Dorsolateral prefrontal cortex (tissue), 120 donors: ENCODE measurements at regions of chr4 and their contacts with region 1.

Region 1: DNA sequence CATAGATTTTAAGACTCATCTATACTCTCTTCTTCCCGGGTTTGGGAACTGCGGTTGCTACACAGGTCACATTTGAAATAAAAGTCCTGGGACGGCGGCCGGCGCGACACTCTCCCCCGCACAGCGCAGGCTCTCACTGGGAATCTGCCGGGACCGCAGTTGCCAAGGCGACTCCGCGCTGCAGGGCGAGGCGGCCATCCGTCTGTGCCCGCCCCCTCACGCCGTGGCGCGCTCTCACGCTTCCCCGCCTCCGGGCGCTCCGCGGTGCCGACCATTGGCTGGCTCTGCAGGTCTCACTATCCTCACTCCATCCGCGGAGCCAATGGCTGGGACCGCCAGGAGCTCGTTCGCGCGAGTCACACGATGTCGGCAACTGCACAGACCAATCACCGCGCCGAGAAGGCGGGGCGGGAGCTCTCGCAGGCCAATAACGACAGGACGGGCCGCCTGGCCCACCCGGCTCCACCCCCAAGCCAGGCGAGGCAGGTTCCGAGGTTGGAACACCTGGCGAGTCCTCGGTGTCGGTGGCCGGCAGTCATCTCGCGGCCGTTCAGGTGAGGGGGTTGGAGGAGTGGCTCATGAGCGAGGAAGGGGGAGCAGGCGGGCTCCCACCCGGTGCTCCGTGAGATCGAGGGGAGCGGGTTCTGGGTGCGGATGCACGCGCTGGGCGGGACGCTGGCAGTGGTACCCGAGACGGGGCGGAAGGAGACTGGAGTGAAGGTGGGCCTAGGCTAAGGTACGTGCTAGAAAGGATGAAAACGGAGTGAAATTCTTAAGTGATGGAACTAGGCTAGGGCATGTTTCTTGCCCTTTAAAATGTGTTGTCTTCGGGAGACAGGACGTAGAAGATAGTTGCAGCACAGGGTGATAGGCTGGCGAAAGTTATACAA is at the start of gene MSMO1:
- DNase-seq: peak; percentile 99 to 100 (median 99)
- H3K4me3 ChIP-seq: peak within 1 kb of the TSS; percentile 64 to 99 (median 92)
- H3K27ac ChIP-seq: peak within 1 kb of the TSS; percentile 79 to 99 (median 95)
- H3K27me3 ChIP-seq: no peaks in the 10 kb centered on the region
- CTCF ChIP-seq: peak in 14 of 56 donors; percentile 5 to 38 (median 17)
- total RNA-seq, gene MSMO1: 33.4 to 188 (median 66.6) TPM

Region 2: DNA sequence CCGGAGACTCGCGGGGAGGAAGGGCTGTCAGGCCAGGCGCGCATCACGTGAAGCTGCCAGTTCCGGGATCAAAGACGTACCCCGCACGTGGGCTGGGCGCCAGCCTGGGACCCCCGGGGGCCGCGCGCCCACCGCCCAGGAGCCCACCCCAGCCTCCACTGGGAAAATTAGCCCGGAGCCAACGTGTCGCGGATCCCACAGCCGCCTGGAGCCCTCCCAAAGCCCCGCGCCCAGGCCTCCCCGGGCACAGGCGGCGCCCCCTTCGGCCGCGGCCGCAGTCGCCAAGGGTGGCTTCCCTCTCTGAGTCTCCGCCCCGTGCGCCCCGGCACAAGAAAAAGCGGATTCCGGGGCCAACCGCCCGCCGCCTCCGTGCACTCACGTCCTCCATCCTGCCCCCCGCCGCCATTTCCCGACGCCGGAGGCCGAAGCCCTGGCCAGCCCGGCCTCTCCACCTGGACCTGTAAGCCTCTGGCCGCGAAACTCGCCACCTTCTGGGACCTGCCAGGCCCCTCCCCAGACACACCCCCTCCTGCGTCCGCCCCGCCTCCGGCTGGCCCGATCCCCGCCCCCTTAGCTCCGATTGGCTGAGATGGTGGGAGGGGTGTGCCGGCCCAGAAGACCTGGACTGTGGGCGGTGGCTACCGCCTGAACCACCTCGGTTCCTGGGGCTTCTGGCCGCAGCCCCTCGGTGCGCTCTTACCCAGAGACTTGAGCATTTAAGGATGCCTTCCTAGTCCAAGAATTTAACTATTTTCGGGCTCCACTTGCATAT is 214.9 kb before region 1 on chr4 and contains the start of gene TMEM192:
- intact Hi-C with region 1: loop called (anchors 5 kb)
- DNase-seq: peak; percentile 89 to 98 (median 96)
- H3K4me3 ChIP-seq: peak within 1 kb of the TSS; percentile 67 to 100 (median 93)
- H3K27ac ChIP-seq: peak within 1 kb of the TSS; percentile 62 to 98 (median 93)
- H3K27me3 ChIP-seq: no peaks in the 10 kb centered on the region
- CTCF ChIP-seq: peak in 36 of 56 donors; percentile 8 to 66 (median 37)
- total RNA-seq, gene TMEM192: 12.0 to 35.8 (median 23.8) TPM

Region 3: DNA sequence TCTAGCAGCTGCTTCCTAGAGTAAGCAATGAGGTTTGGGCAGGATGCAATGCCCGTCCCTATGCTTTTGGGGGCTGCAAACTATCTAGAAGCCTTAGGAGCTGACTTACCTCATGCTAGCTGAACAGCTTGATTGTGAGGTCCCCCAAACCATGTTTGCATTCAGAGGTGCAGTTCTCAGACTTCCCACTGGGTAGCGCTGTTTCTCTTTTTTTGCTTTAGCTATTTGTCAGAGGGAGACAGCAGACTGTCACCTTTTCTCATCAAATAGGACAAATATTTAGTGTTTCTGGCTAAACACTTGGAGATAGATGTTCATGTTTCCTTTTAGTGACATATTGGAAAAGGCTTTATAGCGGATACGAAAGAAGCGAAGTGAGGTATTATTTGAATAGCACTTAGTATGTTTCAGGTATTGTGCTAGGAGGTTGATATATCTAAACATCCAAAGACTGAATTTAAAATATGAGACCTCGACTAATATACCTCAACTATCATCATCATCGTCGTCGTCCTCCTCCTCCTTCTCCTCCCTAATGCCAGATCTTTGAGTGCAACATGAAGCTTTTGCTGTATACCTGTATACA is 196.1 kb before region 1 on chr4:
- intact Hi-C with region 1: loop called (anchors 5 kb)
- DNase-seq: peak in 7 of 10 donors; percentile 53 to 82 (median 66)
- H3K4me3 ChIP-seq: peak overlapping the region in 26 of 59 donors; percentile 6 to 41 (median 23)
- H3K27ac ChIP-seq: peak overlapping the region in 14 of 59 donors; percentile 2 to 60 (median 34)
- H3K27me3 ChIP-seq: no peaks in the 10 kb centered on the region
- CTCF ChIP-seq: peak; percentile 78 to 100 (median 94)

Region 4: DNA sequence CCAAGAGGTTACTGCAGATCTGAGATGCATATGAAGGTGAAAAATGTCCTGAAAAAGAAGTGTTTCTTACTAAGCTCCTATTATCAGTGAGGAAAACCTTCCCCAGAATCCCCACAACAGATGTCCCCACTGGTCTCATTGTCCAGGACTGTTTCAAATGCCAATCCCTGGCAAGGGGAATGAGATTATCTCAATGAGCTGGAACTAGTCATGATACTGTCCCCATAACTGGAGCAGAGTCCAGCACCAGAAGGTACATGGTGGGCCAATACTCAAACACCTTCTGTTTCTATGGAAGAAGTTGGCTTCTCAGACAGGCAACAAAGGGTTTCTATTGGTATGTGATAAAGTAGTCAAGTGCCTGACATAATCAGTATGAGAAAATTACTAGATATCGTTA is 324.4 kb after region 1 on chr4:
- intact Hi-C with region 1: no loop called
- DNase-seq: peak in 1 of 10 donors; percentile 76
- H3K4me3 ChIP-seq: no peak overlapping the region
- H3K27ac ChIP-seq: peak overlapping the region in 1 of 59 donors; percentile 29
- H3K27me3 ChIP-seq: peaks cover 0 to 4% (median 0%) of the 10 kb centered on the region in 45 donors
- CTCF ChIP-seq: no peak